ENCODE measurements at regions of chr2 and their contacts with region 1.

Region 1: GRCh38 chr2:156986337-156986988 is 271.0 kb upstream of the GALNT5 start:
- DNase-seq: peak; percentile 26 to 42
- H3K4me3 ChIP-seq: no peak overlapping the region
- H3K4me3 Mint-ChIP-seq: no peak overlapping the region
- H3K27ac Mint-ChIP-seq: no peak overlapping the region
- H3K4me1 ChIP-seq: no peaks in the 10 kb centered on the region
- H3K4me1 Mint-ChIP-seq: no peaks in the 10 kb centered on the region
- H3K27me3 ChIP-seq: no peaks in the 10 kb centered on the region
- H3K27me3 Mint-ChIP-seq: no peaks in the 10 kb centered on the region
- CTCF ChIP-seq: peak in 1 of 2 experiments; percentile 9

Region 2: DNA sequence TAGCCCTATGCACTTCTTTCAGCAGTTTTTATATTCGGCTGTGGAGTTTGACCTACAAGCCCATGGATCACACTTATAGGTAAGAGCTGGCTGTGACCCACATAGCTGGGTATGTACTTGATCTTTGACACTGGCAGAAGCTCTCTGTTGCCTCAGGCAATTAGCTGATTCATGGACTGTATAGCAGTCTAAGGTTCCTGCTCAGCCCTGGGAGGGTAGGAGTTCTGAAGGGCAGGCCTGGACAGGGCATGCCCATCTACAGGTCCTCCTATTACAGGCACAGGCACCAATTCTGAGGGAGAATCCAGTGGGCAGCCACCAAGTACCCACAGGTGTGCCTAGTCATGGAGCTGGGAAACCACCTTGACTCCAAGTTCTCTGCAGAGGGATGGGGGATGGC is 30.8 kb before region 1 on chr2:
- CTCF ChIA-PET with region 1: no interaction called
- POLR2A ChIA-PET with region 1: no interaction called
- intact Hi-C with region 1: no loop called
- DNase-seq: no peak
- H3K4me3 ChIP-seq: no peak overlapping the region
- H3K4me3 Mint-ChIP-seq: no peak overlapping the region
- H3K27ac Mint-ChIP-seq: no peak overlapping the region
- H3K4me1 ChIP-seq: no peaks in the 10 kb centered on the region
- H3K4me1 Mint-ChIP-seq: no peaks in the 10 kb centered on the region
- H3K27me3 ChIP-seq: no peaks in the 10 kb centered on the region
- H3K27me3 Mint-ChIP-seq: no peaks in the 10 kb centered on the region
- CTCF ChIP-seq: no peak

Region 3: GRCh38 chr2:156999661-157000060 is 13.2 kb after region 1 on chr2:
- CTCF ChIA-PET with region 1: no interaction called
- POLR2A ChIA-PET with region 1: no interaction called
- intact Hi-C with region 1: no loop called
- DNase-seq: no peak
- H3K4me3 ChIP-seq: no peak overlapping the region
- H3K4me3 Mint-ChIP-seq: no peak overlapping the region
- H3K27ac Mint-ChIP-seq: no peak overlapping the region
- H3K4me1 ChIP-seq: no peaks in the 10 kb centered on the region
- H3K4me1 Mint-ChIP-seq: no peaks in the 10 kb centered on the region
- H3K27me3 ChIP-seq: no peaks in the 10 kb centered on the region
- H3K27me3 Mint-ChIP-seq: no peaks in the 10 kb centered on the region
- CTCF ChIP-seq: no peak

Region 4: DNA sequence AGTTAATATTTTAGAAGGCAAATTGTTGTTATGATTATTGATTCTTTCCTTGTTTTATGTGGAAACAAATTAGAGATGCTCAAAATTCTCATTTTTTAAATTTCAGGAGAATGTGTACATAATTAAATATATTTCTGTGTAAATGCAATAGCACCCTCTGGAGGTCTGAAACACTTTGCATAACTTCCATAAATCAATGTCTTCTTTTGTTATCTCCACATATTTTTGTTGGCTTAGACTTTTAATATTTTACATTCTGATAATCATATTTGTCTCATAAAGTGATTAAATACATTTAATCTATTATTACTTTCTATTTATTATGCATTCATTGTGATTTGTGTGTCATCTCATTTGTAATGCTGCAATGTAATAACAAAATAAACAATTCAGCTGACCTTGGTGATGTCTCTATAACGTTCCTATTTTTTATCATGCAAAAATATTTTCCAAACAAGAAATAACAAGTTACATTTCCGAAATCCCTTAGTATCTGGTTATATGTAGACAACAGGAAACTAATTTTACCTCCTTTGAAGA is 69.3 kb after region 1 on chr2:
- CTCF ChIA-PET with region 1: no interaction called
- POLR2A ChIA-PET with region 1: no interaction called
- intact Hi-C with region 1: loop called (anchors 2 kb)
- DNase-seq: peak in 1 of 2 experiments; percentile 13
- H3K4me3 ChIP-seq: no peak overlapping the region
- H3K4me3 Mint-ChIP-seq: no peak overlapping the region
- H3K27ac Mint-ChIP-seq: no peak overlapping the region
- H3K4me1 ChIP-seq: peaks cover 8% of the 10 kb centered on the region
- H3K4me1 Mint-ChIP-seq: peaks cover 7% of the 10 kb centered on the region
- H3K27me3 ChIP-seq: no peaks in the 10 kb centered on the region
- H3K27me3 Mint-ChIP-seq: no peaks in the 10 kb centered on the region
- CTCF ChIP-seq: peak; percentile 40 to 47

Measured in Caco-2 (cell line).